ENCODE measurements at regions of chr2 and their contacts with region 1.

Region 1: GRCh38 chr2:33437297-33437696 is 39.2 kb upstream of the RASGRP3 start:
- DNase-seq: no peak
- ATAC-seq: no peak
- H3K4me3 ChIP-seq: peak overlapping the region; percentile 63
- H3K27ac ChIP-seq: peak overlapping the region; percentile 87
- H3K4me1 ChIP-seq: peaks cover 5% of the 10 kb centered on the region
- H3K27me3 ChIP-seq: no peaks in the 10 kb centered on the region

Region 2: GRCh38 chr2:33275689-33276444 is 161.4 kb before region 1 on chr2:
- intact Hi-C with region 1: loop called in 1 of 4 experiments (anchors 10 kb)
- DNase-seq: peak; percentile 61 to 74 (median 70)
- ATAC-seq: peak; percentile 78 to 93
- H3K4me3 ChIP-seq: no peak overlapping the region
- H3K27ac ChIP-seq: peak overlapping the region; percentile 75
- H3K4me1 ChIP-seq: no peaks in the 10 kb centered on the region
- H3K27me3 ChIP-seq: no peaks in the 10 kb centered on the region

Region 3: GRCh38 chr2:33570681-33571080 is 133.4 kb after region 1 on chr2:
- intact Hi-C with region 1: no loop called
- DNase-seq: no peak
- ATAC-seq: no peak
- H3K4me3 ChIP-seq: no peak overlapping the region
- H3K27ac ChIP-seq: no peak overlapping the region
- H3K4me1 ChIP-seq: no peaks in the 10 kb centered on the region
- H3K27me3 ChIP-seq: no peaks in the 10 kb centered on the region

Measured in right cardiac atrium (tissue), 5 donors.